ENCODE measurements at regions of chr18 and their contacts with region 1.

Region 1: DNA sequence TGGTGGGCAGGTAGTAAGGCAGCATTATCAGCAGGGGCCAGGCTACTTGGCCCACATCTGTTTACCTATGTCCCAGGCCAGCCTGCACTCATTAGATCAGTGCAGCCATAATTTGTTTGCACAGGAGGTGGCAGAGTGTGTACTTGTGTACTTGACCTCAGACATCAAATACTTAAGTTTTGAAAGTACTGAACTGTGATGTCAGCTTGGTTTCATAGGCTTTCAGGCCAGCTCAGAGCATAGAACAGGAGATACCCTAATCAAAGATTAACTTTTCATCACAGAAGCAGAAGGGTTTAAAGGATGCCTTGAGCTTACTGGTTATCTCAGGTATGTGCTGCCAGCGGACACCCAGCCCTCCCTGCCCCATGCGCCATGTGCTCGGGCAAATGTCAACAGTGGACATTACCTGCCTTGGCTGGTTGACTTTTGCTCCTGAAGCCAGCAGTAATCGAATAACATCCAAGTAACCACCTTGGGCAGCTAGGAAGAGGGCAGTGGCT is 33.2 kb downstream of the ANKRD29 start:
- DNase-seq: peak in 1 of 2 donors; percentile 46
- ATAC-seq: peak; percentile 76

Region 2: GRCh38 chr18:23433360-23433759 is 196.1 kb before region 1 on chr18:
- intact Hi-C with region 1: no loop called
- DNase-seq: peak; percentile 67 to 79
- ATAC-seq: peak; percentile 93

Region 3: GRCh38 chr18:23703057-23703986 is 73.8 kb after region 1 on chr18:
- intact Hi-C with region 1: loop called in 1 of 2 experiments (anchors 10 kb)
- DNase-seq: no peak
- ATAC-seq: peak; percentile 98

Region 4: DNA sequence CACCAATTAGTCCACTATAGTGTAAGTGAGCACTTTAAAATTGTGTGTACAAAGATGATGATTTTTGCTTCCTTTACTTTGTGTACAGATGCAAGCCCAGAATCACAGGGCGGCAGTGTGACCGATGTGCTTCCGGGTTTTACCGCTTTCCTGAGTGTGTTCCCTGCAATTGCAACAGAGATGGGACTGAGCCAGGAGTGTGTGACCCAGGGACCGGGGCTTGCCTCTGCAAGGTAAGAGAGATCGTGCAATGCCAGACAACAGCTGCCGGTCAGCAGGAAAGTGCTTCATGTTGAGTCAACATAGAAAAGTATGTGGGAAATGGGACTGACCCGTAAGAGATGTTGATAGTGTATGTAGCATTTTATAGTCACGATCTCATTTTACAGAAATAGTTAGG is 228.3 kb after region 1 on chr18:
- intact Hi-C with region 1: no loop called
- DNase-seq: no peak
- ATAC-seq: peak; percentile 30

Region 5: DNA sequence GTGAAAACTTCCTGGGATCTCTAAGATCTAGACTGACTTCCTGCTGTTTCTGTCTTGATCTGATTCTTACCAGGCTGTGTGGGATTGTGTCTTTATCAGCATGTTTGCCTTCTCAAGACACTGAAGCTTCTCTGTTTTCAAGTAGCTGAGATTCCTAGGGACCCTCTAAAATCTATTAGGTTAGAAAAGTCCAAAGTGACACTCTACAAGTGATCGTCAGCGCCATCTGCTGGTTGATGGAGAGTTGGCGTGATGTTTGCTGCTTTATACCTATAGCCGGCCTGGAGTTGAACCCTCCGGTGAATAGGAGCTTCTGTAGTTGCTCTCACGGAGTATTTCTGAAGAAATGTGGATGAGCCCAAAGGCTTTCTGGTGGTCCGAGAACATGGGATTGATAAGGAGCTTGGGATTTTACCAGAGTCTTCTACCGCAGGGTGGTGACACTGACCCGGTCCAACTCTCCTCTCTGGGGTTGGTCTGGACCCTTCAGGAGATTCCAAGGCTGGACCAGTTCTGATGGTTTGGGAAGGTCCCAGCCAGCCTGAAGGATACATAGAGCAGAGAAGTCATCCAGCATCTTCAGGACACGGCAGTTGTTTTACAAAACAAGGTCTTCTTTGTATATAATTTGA is 289.0 kb after region 1 on chr18:
- intact Hi-C with region 1: loop called in 1 of 2 experiments (anchors 10 kb)
- DNase-seq: peak; percentile 53 to 87
- ATAC-seq: peak; percentile 76